Posterior vena cava (tissue), 2 donors: ENCODE measurements at regions of chr3 and their contacts with region 1.

Region 1: DNA sequence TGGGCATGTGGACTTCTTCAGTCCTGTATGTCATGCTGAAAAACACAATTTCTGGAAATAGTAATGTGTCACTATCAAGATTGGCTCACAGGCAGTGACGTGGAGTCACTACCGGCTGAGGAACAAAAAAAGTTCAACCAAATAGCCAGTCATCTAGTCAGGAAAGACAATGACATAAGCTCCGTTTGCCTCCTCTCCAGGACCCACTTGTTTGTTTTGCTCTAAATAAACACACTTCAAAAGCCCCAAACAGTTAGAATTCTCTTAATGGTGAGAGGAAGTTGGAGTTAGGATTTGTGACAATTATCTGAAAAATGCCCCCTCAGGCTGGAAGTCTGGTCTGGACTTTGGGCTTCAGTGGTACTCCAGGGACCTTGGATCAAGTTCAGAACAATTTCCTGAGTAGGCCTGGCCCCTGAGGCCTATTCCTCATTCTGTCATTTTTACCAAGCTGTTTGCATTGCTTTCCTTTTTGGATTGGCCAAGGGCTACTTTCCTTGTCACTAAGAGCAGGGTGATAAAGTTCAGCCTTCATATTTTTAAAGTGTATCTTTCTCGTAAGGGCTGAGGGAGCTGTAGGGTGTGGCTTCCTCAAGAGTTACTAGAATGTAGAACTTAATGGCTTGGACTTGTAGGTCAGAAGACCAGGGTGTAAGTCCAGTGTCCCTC is 98.9 kb downstream of the EOMES start:
- DNase-seq: no peak

Region 2: DNA sequence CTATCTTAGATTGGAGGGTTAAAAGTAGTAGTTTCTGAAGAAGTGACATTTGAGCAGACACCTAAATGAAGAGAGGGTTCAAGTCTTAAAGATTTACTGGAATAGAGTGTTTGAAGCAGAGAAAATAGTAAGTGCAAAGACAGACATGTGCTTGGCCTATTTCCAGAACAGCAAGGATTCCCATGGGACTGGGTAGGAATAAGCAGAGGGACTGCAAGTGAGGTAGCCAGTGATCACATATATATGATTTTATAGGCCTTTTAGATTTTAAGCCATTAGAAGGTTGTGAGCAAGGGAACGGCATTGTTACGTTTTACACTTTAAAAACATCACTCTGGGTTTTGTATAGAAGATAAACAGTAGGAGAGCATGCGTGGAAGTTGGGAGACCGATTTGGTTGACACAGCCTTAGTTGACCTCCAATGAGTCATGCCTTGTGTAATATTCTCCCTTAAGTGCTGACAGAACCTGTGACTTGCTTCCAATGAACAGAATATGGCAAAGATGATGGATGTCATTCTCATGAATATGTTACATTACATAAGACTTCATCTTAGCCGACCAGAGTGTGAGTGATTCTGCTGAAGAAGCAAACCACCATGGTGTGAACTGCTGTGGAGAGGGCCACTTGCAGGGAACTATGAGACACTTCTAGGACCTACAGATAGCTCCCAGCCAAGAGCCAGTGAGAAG is 101.9 kb before region 1 on chr3:
- intact Hi-C with region 1: loop called in 1 of 2 experiments (anchors 10 kb)
- DNase-seq: no peak

Region 3: GRCh38 chr3:27568393-27568792 is 54.8 kb before region 1 on chr3:
- intact Hi-C with region 1: loop called in 1 of 2 experiments (anchors 10 kb)
- DNase-seq: no peak

Region 4: DNA sequence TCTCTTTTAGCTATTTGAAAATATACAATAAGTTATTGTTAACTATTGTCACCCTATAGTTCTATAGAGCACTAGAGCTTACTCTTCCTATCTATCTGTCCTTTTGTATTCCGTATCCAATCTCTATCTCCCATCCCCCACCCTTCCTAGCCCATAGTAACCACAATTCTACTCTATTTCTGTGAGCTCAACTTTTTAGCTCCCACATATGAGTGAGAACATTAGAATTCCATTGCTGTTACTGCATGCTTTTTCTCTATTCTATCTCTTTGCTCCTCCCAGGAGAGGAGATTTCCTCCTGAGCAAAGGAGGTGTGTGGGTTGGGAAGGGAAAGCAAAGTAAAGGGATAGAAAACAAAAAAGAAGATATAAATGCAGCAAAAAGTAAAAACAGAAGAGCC is 33.4 kb before region 1 on chr3:
- intact Hi-C with region 1: no loop called
- DNase-seq: no peak